ENCODE measurements at regions of chr1 and their contacts with region 1.

Region 1: GRCh38 chr1:65687428-65688214 is 105.1 kb upstream of the PDE4B start:
- DNase-seq: peak; percentile 43
- ATAC-seq: peak; percentile 95
- H3K4me3 ChIP-seq: no peak overlapping the region
- H3K27ac ChIP-seq: no peak overlapping the region
- H3K4me1 ChIP-seq: no peaks in the 10 kb centered on the region
- H3K27me3 ChIP-seq: no peaks in the 10 kb centered on the region
- CTCF ChIP-seq: peak; percentile 71 to 88 (median 82)
- POLR2A ChIP-seq: no peak
- RAD21 ChIP-seq: peak; percentile 97

Region 2: DNA sequence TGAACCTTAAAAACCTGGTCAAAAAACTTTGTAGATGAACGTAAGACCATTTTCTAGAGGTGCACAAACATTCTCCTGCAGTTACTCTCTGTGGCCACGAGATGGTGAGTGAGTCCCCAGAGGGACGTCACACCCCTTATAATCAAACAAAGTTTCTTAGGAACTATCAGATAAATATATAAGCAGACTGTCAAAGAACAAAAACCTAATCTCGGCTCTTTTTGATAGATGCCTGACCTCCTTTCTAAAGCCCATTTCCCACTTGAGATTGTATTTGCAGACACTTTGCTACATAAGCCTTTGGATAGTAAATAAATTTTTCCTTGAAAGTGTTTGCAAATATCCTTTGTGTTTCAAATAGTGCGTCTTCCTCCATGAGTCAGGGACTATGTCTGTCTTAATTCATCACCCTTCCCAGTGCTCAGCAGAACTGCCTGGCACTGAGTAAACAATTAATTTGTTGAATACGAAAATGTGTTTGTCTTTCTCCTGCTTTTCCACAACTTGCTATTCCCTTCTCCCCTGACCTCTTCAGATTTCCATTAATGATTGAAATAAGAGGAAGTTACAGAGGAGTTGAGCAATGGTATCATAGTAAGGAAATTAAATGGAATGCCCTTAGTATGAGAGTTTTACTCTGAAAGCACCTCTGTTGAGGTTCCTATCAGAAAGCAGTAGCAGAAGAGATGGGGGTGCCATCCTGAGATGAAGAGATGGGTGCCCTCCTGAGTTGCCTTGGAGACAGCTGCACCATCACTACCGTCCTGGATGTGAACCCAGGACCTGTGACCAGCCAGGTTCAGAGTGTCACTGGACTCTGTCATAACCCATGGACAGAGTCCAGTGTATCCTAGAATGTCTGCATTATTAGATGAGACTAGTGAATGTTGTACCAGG is 1000.5 kb before region 1 on chr1:
- CTCF ChIA-PET with region 1: no interaction called
- POLR2A ChIA-PET with region 1: no interaction called
- RAD21 ChIA-PET with region 1: no interaction called
- intact Hi-C with region 1: loop called (anchors 10 kb)
- DNase-seq: peak; percentile 43
- ATAC-seq: peak; percentile 79
- H3K4me3 ChIP-seq: no peak overlapping the region
- H3K27ac ChIP-seq: no peak overlapping the region
- H3K4me1 ChIP-seq: no peaks in the 10 kb centered on the region
- H3K27me3 ChIP-seq: no peaks in the 10 kb centered on the region
- CTCF ChIP-seq: peak; percentile 74 to 83 (median 83)
- POLR2A ChIP-seq: no peak
- RAD21 ChIP-seq: peak; percentile 72

Region 3: GRCh38 chr1:65075123-65075976 is 612.3 kb before region 1 on chr1:
- CTCF ChIA-PET with region 1: interaction called, 6 read pairs
- POLR2A ChIA-PET with region 1: no interaction called
- RAD21 ChIA-PET with region 1: no interaction called
- intact Hi-C with region 1: loop called (anchors 1 kb)
- DNase-seq: peak; percentile 59
- ATAC-seq: peak; percentile 94
- H3K4me3 ChIP-seq: no peak overlapping the region
- H3K27ac ChIP-seq: no peak overlapping the region
- H3K4me1 ChIP-seq: no peaks in the 10 kb centered on the region
- H3K27me3 ChIP-seq: no peaks in the 10 kb centered on the region
- CTCF ChIP-seq: peak; percentile 69 to 81 (median 81)
- POLR2A ChIP-seq: no peak
- RAD21 ChIP-seq: peak; percentile 78

Region 4: DNA sequence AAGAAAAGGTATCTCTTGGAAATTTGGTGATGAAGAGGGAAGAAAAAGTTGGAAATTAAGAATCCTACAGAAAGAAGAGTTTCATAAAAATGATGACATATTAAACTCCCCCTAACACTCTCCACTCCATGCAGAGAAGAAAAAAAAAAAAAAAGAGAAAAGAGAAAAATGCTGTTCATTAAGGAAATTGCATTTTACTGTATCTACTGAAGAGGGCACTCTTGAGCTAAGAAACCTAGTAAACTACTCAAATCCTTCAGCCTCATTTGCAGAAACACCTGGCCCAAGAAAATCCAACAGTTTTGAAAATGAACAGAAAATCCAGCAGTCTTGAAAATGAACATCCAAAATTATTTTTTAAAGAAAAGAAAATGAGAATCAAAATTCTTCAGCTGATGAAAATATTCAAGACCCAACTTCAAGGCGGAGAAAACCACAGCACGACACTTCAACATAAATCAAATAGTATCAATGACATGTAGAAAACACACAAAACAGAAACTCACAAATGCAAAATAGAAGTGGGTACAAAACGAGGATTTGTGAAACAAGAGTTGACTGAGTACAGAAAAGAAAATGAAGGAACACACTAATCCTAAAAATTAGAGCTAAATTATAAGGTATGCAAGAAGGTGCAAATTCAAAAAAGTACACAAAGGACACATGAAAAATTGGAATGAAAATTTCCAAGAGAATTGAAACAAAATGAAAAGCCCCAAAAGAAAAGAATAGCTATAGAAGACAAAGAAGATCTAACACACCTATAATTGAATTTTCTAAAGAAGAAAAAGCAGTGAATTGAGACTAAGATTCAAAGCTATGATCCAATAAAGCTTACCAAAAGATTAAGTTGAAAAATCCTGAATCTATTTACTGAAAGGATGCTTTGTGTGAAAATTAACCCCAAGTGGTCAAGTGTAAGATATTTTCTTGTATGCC is 451.5 kb before region 1 on chr1:
- CTCF ChIA-PET with region 1: interaction called, 38 read pairs
- POLR2A ChIA-PET with region 1: interaction called, 3 read pairs
- RAD21 ChIA-PET with region 1: interaction called in 1 of 2 experiments, 4 read pairs
- intact Hi-C with region 1: loop called (anchors 1 kb)
- DNase-seq: peak; percentile 41
- ATAC-seq: no peak
- H3K4me3 ChIP-seq: no peak overlapping the region
- H3K27ac ChIP-seq: no peak overlapping the region
- H3K4me1 ChIP-seq: no peaks in the 10 kb centered on the region
- H3K27me3 ChIP-seq: no peaks in the 10 kb centered on the region
- CTCF ChIP-seq: peak; percentile 50 to 72 (median 67); a peak in 5 of 6 replicates
- POLR2A ChIP-seq: no peak
- RAD21 ChIP-seq: peak; percentile 74

Measured in HCT116 (cell line).